Activated CD4-positive, alpha-beta T cell treated with anti-CD3 and anti-CD28 coated beads for 36 hours (primary cell): ENCODE measurements at regions of chr7 and their contacts with region 1.

Region 1: DNA sequence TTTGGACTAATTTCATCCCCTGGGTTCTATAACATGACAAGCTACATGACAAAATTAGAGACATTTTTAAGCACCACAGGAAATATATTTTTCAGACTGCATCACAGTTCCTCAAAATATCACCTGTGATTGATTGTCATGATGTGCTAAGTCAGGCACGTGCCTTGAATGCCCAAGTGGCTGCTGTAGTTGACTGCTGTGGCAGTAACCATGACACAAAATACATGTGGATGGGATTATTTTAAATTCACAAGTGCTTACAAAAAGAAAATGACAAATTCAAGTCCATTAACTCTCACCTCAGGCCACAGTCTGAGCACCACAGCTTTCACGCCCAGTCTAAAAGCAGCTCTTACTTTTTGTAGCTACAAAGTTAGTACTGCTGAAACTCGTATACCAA is 45.5 kb downstream of the TNPO3 start:
- DNase-seq: peak; percentile 11
- ATAC-seq: no peak
- H3K4me3 Mint-ChIP-seq: no peak overlapping the region
- H3K27ac Mint-ChIP-seq: peak overlapping the region; percentile 87
- H3K4me1 Mint-ChIP-seq: peaks cover 40% of the 10 kb centered on the region
- H3K27me3 Mint-ChIP-seq: no peaks in the 10 kb centered on the region

Region 2: DNA sequence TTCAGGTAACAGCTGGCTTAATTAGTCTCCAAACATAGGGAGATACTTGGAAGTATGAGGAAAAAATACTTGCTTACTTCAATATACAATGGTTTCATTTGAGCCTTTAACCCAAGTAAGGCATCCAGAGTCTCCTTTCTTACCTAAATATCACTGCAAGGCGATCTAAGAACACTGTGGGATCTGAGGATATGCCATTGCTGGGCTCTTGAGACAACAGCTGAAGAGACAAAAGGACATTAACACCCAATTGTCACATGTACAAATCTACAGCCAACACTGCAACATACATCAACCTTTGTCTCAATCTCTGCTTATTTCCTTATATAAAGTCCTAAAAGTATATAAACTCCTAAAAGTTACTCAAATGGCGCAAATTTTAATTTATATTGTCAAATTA is 27.3 kb before region 1 on chr7:
- CTCF ChIA-PET with region 1: no interaction called
- POLR2A ChIA-PET with region 1: no interaction called
- intact Hi-C with region 1: no loop called
- DNase-seq: no peak
- ATAC-seq: no peak
- H3K4me3 Mint-ChIP-seq: no peak overlapping the region
- H3K27ac Mint-ChIP-seq: no peak overlapping the region
- H3K4me1 Mint-ChIP-seq: no peaks in the 10 kb centered on the region
- H3K27me3 Mint-ChIP-seq: no peaks in the 10 kb centered on the region

Region 3: GRCh38 chr7:129054438-129055293 is 45.2 kb after region 1 on chr7 and contains the start of gene TNPO3:
- CTCF ChIA-PET with region 1: interaction called, 3 read pairs
- POLR2A ChIA-PET with region 1: interaction called, 4 read pairs
- intact Hi-C with region 1: loop called (anchors 1 kb)
- DNase-seq: peak; percentile 94
- ATAC-seq: peak; percentile 91
- H3K4me3 Mint-ChIP-seq: peak within 1 kb of the TSS; percentile 89
- H3K27ac Mint-ChIP-seq: peak within 1 kb of the TSS; percentile 99
- H3K4me1 Mint-ChIP-seq: peaks cover 28% of the 10 kb centered on the region
- H3K27me3 Mint-ChIP-seq: peaks cover 3% of the 10 kb centered on the region
- total RNA-seq, gene TNPO3: 57.7 to 60.5 TPM